B cell (primary cell): ENCODE measurements at regions of chr22 and their contacts with region 1.

Region 1: DNA sequence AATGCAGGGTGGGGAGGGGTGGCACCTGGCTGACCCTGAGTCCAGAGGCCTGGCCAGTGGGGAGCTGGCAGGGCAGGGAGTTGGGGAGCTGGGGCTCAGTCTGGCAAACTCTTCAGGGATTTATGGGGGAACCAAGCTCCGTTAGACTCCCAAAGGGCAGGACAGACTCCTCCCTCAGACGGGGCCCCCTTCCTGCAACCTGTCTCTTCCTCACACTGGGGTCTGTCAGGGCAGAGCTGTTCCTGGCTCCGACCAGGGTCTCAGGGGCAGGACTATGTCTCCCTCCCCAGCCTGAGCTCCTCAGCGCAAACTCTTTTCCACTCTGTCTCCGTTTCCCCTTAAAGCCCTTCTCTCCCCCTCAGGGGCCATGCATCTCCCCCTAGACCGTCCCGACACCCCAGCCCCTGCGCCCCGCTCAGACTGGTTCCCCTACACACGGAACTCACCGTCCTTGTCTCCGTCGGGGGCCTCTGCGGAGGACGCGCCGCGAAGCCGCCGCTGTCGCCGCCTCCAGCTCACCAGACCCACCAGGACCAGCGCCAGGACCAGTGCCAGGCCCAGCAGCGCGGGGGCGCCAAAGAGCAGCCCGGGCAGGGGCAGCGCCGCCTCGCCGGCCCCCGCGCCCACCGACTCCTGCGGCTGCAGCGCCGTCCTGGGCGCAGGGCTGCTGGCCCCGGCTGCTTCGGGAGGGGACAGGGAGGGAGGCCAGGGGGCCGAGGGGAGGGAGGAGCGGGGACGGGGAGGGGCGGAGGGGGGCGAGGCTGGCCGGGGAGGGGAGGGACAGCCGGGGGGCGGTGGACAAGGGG is 748 bp downstream of the TNFRSF13C start:
- DNase-seq: peak; percentile 88
- ATAC-seq: peak; percentile 46
- H3K4me3 ChIP-seq: peak overlapping the region; percentile 59 to 96 (median 88)
- H3K4me3 Mint-ChIP-seq: peak overlapping the region; percentile 100
- H3K27ac ChIP-seq: peak overlapping the region; percentile 94 to 95
- H3K27ac Mint-ChIP-seq: peak overlapping the region; percentile 99
- H3K4me1 ChIP-seq: peaks cover 70 to 86% of the 10 kb centered on the region in 2 donors
- H3K4me1 Mint-ChIP-seq: peaks cover 67% of the 10 kb centered on the region
- H3K27me3 ChIP-seq: no peaks in the 10 kb centered on the region
- H3K27me3 Mint-ChIP-seq: no peaks in the 10 kb centered on the region
- CTCF ChIP-seq: peak; percentile 83

Region 2: DNA sequence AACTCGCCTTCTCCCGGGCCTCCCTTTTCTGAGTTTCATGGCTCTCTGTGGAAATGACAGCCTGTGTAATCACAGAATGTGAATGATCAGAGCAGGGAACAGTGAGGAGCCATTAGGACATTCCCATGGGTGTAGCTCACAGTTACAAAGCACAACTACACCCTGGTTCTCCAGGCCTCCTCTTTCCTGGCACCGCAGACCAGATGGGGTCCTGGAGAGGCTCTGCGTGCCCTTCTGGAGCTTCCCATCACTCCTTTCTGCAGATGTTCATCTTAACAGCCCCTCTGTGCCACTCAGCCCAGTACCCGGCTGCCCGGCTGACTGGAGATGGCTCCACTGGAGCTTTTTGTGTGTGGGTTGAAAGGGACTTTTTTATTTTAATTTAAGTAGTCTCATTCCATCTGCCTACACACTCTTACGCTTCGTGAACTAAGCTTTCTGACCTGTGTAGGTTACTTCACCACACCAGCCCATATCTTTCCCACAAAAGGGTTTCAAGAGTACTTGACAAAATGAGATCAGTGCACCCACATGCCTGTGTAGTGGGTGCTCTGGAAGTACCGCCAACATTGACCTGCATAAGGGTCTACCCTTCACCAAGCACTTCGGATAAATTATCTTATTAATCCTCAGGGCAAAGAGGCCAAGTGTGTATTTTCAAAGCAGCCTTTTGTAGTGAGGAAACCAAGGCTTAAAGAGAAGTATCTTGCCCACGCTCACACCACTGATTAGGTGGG is 63.2 kb before region 1 on chr22:
- CTCF ChIA-PET with region 1: interaction called, 10 read pairs
- POLR2A ChIA-PET with region 1: interaction called, 15 read pairs
- intact Hi-C with region 1: no loop called
- DNase-seq: peak; percentile 61
- ATAC-seq: peak; percentile 61
- H3K4me3 ChIP-seq: peak overlapping the region in 4 of 5 experiments; percentile 0 to 29 (median 8)
- H3K4me3 Mint-ChIP-seq: peak overlapping the region; percentile 80
- H3K27ac ChIP-seq: peak overlapping the region; percentile 92 to 95
- H3K27ac Mint-ChIP-seq: peak overlapping the region; percentile 95
- H3K4me1 ChIP-seq: peaks cover 73 to 87% of the 10 kb centered on the region in 2 donors
- H3K4me1 Mint-ChIP-seq: peaks cover 78% of the 10 kb centered on the region
- H3K27me3 ChIP-seq: no peaks in the 10 kb centered on the region
- H3K27me3 Mint-ChIP-seq: no peaks in the 10 kb centered on the region
- CTCF ChIP-seq: no peak

Region 3: GRCh38 chr22:41910050-41911000 is 15.5 kb before region 1 on chr22:
- CTCF ChIA-PET with region 1: interaction called, 13 read pairs
- POLR2A ChIA-PET with region 1: interaction called, 960 read pairs
- intact Hi-C with region 1: no loop called
- DNase-seq: peak; percentile 73
- ATAC-seq: peak; percentile 10
- H3K4me3 ChIP-seq: peak overlapping the region in 4 of 5 experiments; percentile 35 to 57 (median 50)
- H3K4me3 Mint-ChIP-seq: peak overlapping the region; percentile 83
- H3K27ac ChIP-seq: no peak overlapping the region
- H3K27ac Mint-ChIP-seq: peak overlapping the region; percentile 67
- H3K4me1 ChIP-seq: peaks cover 61% of the 10 kb centered on the region in 2 donors
- H3K4me1 Mint-ChIP-seq: peaks cover 51% of the 10 kb centered on the region
- H3K27me3 ChIP-seq: peaks cover 0 to 44% (median 21%) of the 10 kb centered on the region in 4 experiments
- H3K27me3 Mint-ChIP-seq: peaks cover 9% of the 10 kb centered on the region
- CTCF ChIP-seq: no peak

Region 4: GRCh38 chr22:42169055-42169469 is 243.2 kb after region 1 on chr22:
- CTCF ChIA-PET with region 1: no interaction called
- POLR2A ChIA-PET with region 1: no interaction called
- intact Hi-C with region 1: no loop called
- DNase-seq: peak; percentile 79
- ATAC-seq: peak; percentile 67
- H3K4me3 ChIP-seq: no peak overlapping the region
- H3K4me3 Mint-ChIP-seq: no peak overlapping the region
- H3K27ac ChIP-seq: no peak overlapping the region
- H3K27ac Mint-ChIP-seq: peak overlapping the region; percentile 61
- H3K4me1 ChIP-seq: peaks cover 12 to 31% of the 10 kb centered on the region in 2 donors
- H3K4me1 Mint-ChIP-seq: peaks cover 29% of the 10 kb centered on the region
- H3K27me3 ChIP-seq: no peaks in the 10 kb centered on the region
- H3K27me3 Mint-ChIP-seq: no peaks in the 10 kb centered on the region
- CTCF ChIP-seq: peak; percentile 83

Region 5: GRCh38 chr22:42396621-42397331 is 470.9 kb after region 1 on chr22:
- CTCF ChIA-PET with region 1: no interaction called
- POLR2A ChIA-PET with region 1: interaction called, 10 read pairs
- intact Hi-C with region 1: no loop called
- DNase-seq: peak; percentile 84
- ATAC-seq: peak; percentile 67
- H3K4me3 ChIP-seq: peak overlapping the region; percentile 38 to 78 (median 53)
- H3K4me3 Mint-ChIP-seq: peak overlapping the region; percentile 92
- H3K27ac ChIP-seq: peak overlapping the region; percentile 80 to 99
- H3K27ac Mint-ChIP-seq: peak overlapping the region; percentile 99
- H3K4me1 ChIP-seq: peaks cover 40 to 46% of the 10 kb centered on the region in 2 donors
- H3K4me1 Mint-ChIP-seq: peaks cover 51% of the 10 kb centered on the region
- H3K27me3 ChIP-seq: no peaks in the 10 kb centered on the region
- H3K27me3 Mint-ChIP-seq: no peaks in the 10 kb centered on the region
- CTCF ChIP-seq: peak; percentile 49